PC-9 (cell line): ENCODE measurements at regions of chr19 and their contacts with region 1.

Region 1: DNA sequence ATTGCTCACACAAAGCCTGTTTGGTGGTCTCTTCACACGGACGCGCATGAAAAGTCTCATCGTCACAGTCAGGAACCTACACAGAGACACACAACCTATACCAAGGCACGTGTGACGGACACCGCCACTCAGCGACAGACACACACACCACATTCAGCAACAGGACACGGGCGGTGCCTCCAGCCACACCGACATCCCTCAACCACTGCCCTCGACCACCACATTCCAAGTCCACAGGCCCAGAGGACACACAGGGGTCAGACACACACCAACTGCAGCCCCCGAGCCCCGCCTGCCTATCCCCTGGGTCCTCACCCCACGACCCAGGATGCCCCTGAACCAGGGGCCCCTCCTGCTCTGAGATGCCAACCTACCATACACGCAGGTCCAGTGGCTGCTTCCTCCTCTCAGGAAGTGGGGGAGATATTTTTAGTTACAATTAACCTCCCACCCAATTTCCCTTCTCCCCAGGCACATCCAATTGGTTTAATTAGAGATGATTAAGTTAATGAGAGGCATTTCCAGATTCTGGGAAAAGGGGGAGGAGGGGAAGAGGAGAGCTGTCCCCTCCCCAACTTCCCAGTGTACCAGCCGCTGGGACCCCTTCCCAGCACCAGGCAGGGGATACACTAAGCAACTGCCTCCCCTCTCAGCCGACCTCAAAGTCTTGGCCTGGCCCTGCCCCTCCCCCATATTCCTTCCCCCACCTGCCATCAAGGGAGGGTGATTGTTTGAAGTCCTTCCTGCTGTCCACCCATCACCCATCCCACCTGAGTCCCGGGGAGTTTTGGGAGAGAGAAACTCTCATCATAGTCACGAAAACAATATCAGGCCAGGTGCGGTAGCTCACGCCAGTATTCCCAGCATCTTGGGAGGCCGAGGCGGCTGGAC is 20.4 kb downstream of the MEIS3 start:
- DNase-seq: no peak
- H3K4me3 ChIP-seq: no peak overlapping the region
- H3K27ac ChIP-seq: no peak overlapping the region
- H3K4me1 ChIP-seq: no peaks in the 10 kb centered on the region
- H3K27me3 ChIP-seq: peaks cover 24% of the 10 kb centered on the region
- CTCF ChIP-seq: no peak

Region 2: GRCh38 chr19:47315125-47315821 is 83.7 kb before region 1 on chr19:
- CTCF ChIA-PET with region 1: interaction called, 11 read pairs
- POLR2A ChIA-PET with region 1: no interaction called
- intact Hi-C with region 1: no loop called
- DNase-seq: peak; percentile 80 to 98
- H3K4me3 ChIP-seq: no peak overlapping the region
- H3K27ac ChIP-seq: peak overlapping the region; percentile 70
- H3K4me1 ChIP-seq: peaks cover 28% of the 10 kb centered on the region
- H3K27me3 ChIP-seq: no peaks in the 10 kb centered on the region
- CTCF ChIP-seq: no peak

Region 3: DNA sequence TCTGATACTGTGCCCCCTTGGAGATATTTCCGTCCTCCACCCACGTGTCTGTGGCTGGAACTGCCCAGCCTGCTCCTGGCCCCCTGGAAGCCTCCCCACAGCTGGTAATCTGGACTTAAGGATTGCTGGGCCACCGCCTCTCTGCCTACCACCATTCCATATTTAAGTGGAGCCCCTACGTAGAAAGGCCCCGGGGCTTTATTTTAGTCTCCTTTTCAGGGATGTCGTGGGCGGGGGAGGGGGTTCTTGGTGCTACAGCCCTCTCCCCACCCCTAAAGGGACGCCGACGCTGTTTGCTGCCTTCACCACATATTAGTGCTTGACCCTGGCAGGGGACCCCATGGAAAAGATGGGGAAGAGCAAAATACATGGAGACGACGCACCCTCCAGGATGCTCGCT is 343.7 kb after region 1 on chr19:
- CTCF ChIA-PET with region 1: interaction called, 22 read pairs
- POLR2A ChIA-PET with region 1: no interaction called
- intact Hi-C with region 1: no loop called
- DNase-seq: no peak
- H3K4me3 ChIP-seq: no peak overlapping the region
- H3K27ac ChIP-seq: peak overlapping the region; percentile 73
- H3K4me1 ChIP-seq: peaks cover 29% of the 10 kb centered on the region
- H3K27me3 ChIP-seq: no peaks in the 10 kb centered on the region
- CTCF ChIP-seq: no peak